ENCODE measurements at regions of chr3 and their contacts with region 1.

Region 1: GRCh38 chr3:168865022-168865551 is 769.4 kb upstream of the GOLIM4 start:
- DNase-seq: no peak
- ATAC-seq: no peak
- H3K4me3 ChIP-seq: peak overlapping the region; percentile 36 to 38
- H3K27ac ChIP-seq: no peak overlapping the region
- H3K4me1 ChIP-seq: no peaks in the 10 kb centered on the region
- H3K27me3 ChIP-seq: no peaks in the 10 kb centered on the region

Region 2: GRCh38 chr3:169278092-169278491 is 413.0 kb after region 1 on chr3:
- intact Hi-C with region 1: no loop called
- DNase-seq: no peak
- ATAC-seq: no peak
- H3K4me3 ChIP-seq: no peak overlapping the region
- H3K27ac ChIP-seq: no peak overlapping the region
- H3K4me1 ChIP-seq: peaks cover 1 to 7% of the 10 kb centered on the region in 2 donors
- H3K27me3 ChIP-seq: no peaks in the 10 kb centered on the region

Region 3: GRCh38 chr3:169676925-169677537 is 811.9 kb after region 1 on chr3:
- intact Hi-C with region 1: loop called in 1 of 2 experiments (anchors 10 kb)
- DNase-seq: no peak
- ATAC-seq: no peak
- H3K4me3 ChIP-seq: no peak overlapping the region
- H3K27ac ChIP-seq: no peak overlapping the region
- H3K4me1 ChIP-seq: no peaks in the 10 kb centered on the region
- H3K27me3 ChIP-seq: no peaks in the 10 kb centered on the region

Region 4: GRCh38 chr3:169744366-169745054 is 879.4 kb after region 1 on chr3:
- intact Hi-C with region 1: loop called (anchors 5 to 10 kb)
- DNase-seq: no peak
- ATAC-seq: no peak
- H3K4me3 ChIP-seq: no peak overlapping the region
- H3K27ac ChIP-seq: no peak overlapping the region
- H3K4me1 ChIP-seq: no peaks in the 10 kb centered on the region
- H3K27me3 ChIP-seq: no peaks in the 10 kb centered on the region